Activated CD4-positive, alpha-beta T cell treated with anti-CD3 and anti-CD28 coated beads, Interleukin-2, amount 10 ng/mL, durations not matched to agents 24 days and 14 days (primary cell): ENCODE measurements at regions of chr2 and their contacts with region 1.

Region 1: DNA sequence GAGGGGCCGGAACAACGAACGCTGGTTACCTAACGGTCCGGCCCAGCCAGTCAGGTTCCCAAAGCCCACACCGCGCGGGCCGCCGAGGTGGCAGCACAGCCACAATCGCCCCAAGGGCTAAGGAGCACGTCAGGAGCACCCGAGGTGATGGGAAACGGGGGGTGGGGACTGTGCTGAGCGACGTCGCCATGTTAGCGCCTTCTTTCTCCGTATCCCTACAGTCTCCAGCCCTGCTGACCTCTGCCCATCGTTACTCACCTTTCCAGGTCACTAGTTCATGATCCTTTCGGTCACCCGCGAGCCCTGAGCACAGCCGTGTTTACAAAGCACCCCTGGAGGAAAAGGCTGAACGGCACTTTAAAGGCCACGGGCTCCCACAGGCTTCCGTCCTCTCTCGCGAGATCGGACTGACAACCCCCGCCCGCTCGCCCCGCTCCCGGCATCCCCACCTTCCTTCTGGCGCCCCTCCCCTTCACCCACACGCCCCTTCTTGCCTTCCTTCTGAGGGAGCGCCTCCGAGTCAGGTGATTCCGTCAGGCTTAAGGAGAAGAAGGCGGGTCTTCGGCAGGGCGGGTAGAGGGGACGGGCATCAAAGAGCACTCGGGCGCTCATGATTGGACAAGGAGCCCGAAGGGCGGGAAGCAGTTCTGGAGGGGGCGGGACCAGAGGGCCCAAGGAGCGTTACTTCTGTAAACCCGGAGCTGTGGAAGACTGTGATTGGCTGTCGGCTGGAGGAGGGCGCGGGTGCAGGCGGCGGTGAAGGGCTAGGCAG is at the start of gene ATF2:
- DNase-seq: peak; percentile 99
- H3K4me3 Mint-ChIP-seq: peak within 1 kb of the TSS; percentile 100
- H3K27ac Mint-ChIP-seq: peak within 1 kb of the TSS; percentile 100
- H3K4me1 Mint-ChIP-seq: peaks cover 33% of the 10 kb centered on the region
- H3K27me3 Mint-ChIP-seq: no peaks in the 10 kb centered on the region
- total RNA-seq, gene ATF2: 58.8 and 60.2 TPM in 2 replicates

Region 2: GRCh38 chr2:174593574-174594203 is 574.3 kb before region 1 on chr2:
- intact Hi-C with region 1: loop called (anchors 10 kb)
- DNase-seq: peak; percentile 92
- H3K4me3 Mint-ChIP-seq: peak overlapping the region; percentile 86
- H3K27ac Mint-ChIP-seq: peak overlapping the region; percentile 98
- H3K4me1 Mint-ChIP-seq: peaks cover 53% of the 10 kb centered on the region
- H3K27me3 Mint-ChIP-seq: no peaks in the 10 kb centered on the region

Region 3: GRCh38 chr2:174682578-174683391 is 485.2 kb before region 1 on chr2:
- intact Hi-C with region 1: loop called (anchors 5 kb)
- DNase-seq: peak; percentile 89
- H3K4me3 Mint-ChIP-seq: peak overlapping the region; percentile 92
- H3K27ac Mint-ChIP-seq: peak overlapping the region; percentile 97
- H3K4me1 Mint-ChIP-seq: peaks cover 50% of the 10 kb centered on the region
- H3K27me3 Mint-ChIP-seq: no peaks in the 10 kb centered on the region

Region 4: GRCh38 chr2:175111200-175111657 is 56.7 kb before region 1 on chr2:
- intact Hi-C with region 1: loop called (anchors 5 kb)
- DNase-seq: no peak
- H3K4me3 Mint-ChIP-seq: no peak overlapping the region
- H3K27ac Mint-ChIP-seq: peak overlapping the region; percentile 12
- H3K4me1 Mint-ChIP-seq: peaks cover 3% of the 10 kb centered on the region
- H3K27me3 Mint-ChIP-seq: no peaks in the 10 kb centered on the region

Region 5: DNA sequence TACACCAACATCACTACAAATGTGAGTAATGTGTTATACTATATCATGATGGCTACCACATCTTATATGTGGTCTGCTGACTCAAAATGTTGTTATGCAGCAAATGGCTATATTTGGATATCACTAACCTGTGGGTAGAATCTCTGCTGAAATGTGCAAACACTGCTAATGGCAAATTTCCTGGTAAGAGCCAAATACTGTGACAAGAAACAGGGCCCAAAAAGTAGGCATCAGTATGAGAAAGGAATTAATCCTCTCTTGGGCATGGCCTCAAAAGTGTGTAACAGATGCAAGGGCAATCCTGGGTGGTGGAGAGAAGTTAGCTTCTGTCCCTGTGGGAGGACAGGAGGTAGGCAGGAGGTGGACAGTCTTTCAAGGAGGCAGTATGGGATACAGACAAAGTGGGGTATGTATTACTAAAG is 13.3 kb before region 1 on chr2:
- intact Hi-C with region 1: loop called (anchors 1 kb)
- DNase-seq: peak; percentile 64
- H3K4me3 Mint-ChIP-seq: peak overlapping the region; percentile 24
- H3K27ac Mint-ChIP-seq: peak overlapping the region; percentile 86
- H3K4me1 Mint-ChIP-seq: peaks cover 22% of the 10 kb centered on the region
- H3K27me3 Mint-ChIP-seq: no peaks in the 10 kb centered on the region

Region 6: DNA sequence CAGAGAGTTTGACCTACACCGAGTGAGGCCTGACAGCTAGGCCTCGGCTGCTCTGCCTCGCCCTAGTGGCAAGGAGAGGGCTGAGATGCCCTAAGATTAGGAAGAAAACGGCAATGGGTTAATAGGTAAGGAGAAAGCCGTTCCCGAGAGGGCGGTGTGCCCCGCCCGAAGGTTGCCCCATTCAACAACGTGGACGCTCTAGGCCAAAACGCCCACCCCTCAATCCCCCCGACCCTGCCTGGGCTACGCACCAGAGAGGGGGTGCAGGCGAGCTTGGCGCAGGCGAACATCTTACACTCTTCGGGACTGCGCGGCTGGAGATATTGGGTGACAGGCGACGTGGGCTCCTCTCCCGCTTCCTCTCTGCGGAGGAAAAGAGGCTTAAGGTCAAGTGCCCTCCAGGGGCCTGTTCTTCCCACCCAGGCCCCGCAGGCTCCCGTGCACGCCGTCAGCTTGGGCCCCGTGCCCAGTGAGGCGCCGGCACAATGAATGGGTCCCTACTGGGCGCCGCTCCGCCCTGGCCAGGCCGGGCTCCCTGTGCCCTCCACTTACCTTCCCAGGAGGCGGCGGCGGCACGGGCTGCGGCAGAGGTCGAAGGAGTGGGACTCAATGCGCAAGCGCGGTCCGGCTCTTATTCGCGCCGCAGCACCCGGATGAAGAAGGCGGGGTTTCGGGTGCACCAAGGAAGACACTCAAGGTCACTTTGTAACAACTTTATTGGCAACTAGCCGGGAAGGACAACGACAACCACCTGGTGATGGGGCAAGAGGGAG is 13.3 kb after region 1 on chr2 and contains the start of gene ATP5MC3:
- intact Hi-C with region 1: loop called (anchors 1 kb)
- DNase-seq: peak; percentile 97
- H3K4me3 Mint-ChIP-seq: peak within 1 kb of the TSS; percentile 88
- H3K27ac Mint-ChIP-seq: peak within 1 kb of the TSS; percentile 94
- H3K4me1 Mint-ChIP-seq: peaks cover 20% of the 10 kb centered on the region
- H3K27me3 Mint-ChIP-seq: no peaks in the 10 kb centered on the region
- total RNA-seq, gene ATP5MC3: 405 and 414 TPM in 2 replicates